ENCODE measurements at regions of chr19 and their contacts with region 1.

Region 1: DNA sequence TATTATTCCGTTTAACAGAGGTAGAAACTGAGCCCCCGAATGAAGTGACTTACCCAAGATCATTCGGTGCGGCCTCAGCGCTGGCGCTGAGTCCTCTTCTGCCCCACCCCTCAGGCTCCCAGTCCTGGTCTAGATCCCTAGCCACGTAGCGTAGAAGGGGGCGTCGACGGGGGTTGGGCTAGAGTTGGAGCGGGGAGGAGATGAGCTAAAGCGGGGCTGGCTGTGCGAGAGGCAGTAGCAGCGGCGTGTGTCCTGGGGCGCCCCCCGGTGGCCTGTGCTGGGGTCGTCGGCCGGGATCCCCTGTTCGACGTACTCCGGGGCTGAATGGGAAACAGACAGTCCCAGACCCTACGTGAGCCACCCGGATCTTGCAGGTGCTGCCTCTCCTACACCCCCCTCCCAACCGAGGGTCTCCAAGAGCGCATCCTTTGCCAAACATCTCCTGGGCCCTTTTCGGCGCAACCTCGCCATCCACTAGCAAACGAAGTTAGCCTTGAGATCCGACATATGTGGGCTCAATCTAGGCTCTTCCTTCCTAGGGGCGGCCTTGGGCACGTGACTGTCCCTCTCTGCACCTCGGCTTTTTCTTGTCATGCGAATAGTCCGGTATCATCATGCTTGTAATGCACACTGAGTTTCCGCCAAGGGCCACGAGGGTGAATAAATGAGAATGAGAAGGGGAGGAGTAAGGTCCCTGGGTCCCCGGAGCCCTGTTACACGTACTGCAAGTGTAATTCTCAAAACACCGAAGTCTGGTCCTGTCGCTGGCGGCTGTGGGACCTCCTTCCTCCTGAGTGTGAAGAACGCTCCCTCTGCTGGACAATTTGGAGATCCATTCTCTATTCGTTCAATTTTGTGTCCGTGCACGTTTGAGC is 47.7 kb downstream of the CYP4F22 start:
- DNase-seq: peak; percentile 95 to 97
- ATAC-seq: peak; percentile 84 to 94 (median 86)
- H3K4me3 ChIP-seq: peak overlapping the region; percentile 37
- H3K4me3 Mint-ChIP-seq: peak overlapping the region; percentile 86
- H3K27ac ChIP-seq: peak overlapping the region; percentile 57
- H3K27ac Mint-ChIP-seq: peak overlapping the region; percentile 81 to 84
- H3K4me1 ChIP-seq: peaks cover 23% of the 10 kb centered on the region
- H3K4me1 Mint-ChIP-seq: peaks cover 21 to 31% of the 10 kb centered on the region in 2 donors
- H3K27me3 ChIP-seq: no peaks in the 10 kb centered on the region
- H3K27me3 Mint-ChIP-seq: no peaks in the 10 kb centered on the region
- CTCF ChIP-seq: peak; percentile 73

Region 2: GRCh38 chr19:15091901-15092753 is 463.9 kb before region 1 on chr19:
- intact Hi-C with region 1: loop called (anchors 2 kb)
- DNase-seq: peak; percentile 20 to 88
- ATAC-seq: peak; percentile 77 to 78 (median 78)
- H3K4me3 ChIP-seq: no peak overlapping the region
- H3K4me3 Mint-ChIP-seq: no peak overlapping the region
- H3K27ac ChIP-seq: no peak overlapping the region
- H3K27ac Mint-ChIP-seq: no peak overlapping the region
- H3K4me1 ChIP-seq: peaks cover 7% of the 10 kb centered on the region
- H3K4me1 Mint-ChIP-seq: no peaks in the 10 kb centered on the region
- H3K27me3 ChIP-seq: no peaks in the 10 kb centered on the region
- H3K27me3 Mint-ChIP-seq: peaks cover 9 to 12% of the 10 kb centered on the region in 2 donors
- CTCF ChIP-seq: peak; percentile 76

Region 3: GRCh38 chr19:15177269-15178116 is 378.5 kb before region 1 on chr19:
- intact Hi-C with region 1: loop called (anchors 1 kb)
- DNase-seq: peak; percentile 85 to 92
- ATAC-seq: peak; percentile 93 to 99 (median 98)
- H3K4me3 ChIP-seq: no peak overlapping the region
- H3K4me3 Mint-ChIP-seq: peak overlapping the region; percentile 28
- H3K27ac ChIP-seq: no peak overlapping the region
- H3K27ac Mint-ChIP-seq: no peak overlapping the region
- H3K4me1 ChIP-seq: peaks cover 5% of the 10 kb centered on the region
- H3K4me1 Mint-ChIP-seq: peaks cover 6 to 11% of the 10 kb centered on the region in 2 donors
- H3K27me3 ChIP-seq: peaks cover 2% of the 10 kb centered on the region
- H3K27me3 Mint-ChIP-seq: peaks cover 0 to 14% of the 10 kb centered on the region in 2 donors
- CTCF ChIP-seq: peak; percentile 96

Region 4: DNA sequence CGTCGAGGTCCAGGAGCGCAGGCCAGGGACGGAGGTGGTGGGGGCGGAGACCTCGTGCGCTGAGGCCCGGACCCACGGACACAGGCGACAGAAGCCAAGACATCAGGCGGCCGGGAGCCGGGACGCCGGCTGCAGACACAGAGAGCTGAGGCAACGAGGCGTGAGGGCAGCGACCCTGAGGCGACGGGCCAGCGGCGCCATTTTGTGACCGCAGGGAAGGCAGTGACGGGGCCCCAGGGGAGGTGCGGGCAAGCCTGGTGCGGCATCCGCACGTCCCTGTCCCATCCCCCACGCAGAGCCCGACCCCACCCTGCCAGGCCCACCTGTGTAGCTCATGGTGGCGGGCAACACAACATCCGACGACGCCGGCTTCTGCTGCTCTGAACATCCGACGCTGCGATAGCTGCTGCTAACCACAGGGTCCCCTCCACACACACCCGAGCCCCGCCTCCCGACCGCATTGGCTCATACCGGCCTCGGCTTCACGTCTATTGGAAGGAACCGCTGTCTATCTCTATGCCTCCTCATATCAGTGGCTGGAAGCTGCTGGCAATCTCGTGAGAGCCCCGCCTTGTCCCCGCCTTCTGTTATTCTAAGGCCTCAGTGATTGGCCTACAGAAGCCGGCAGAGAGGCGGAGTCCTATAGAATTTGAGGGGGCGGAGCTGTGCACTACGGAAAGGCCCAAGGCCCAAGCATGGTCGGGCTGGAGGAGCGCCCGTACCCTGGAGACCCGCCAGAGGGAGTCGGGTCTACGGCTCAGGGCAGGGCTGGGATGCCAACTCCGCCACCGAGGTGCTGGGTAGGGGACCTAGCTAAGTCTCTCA is 137.2 kb before region 1 on chr19 and contains the start of gene AKAP8L:
- intact Hi-C with region 1: loop called (anchors 1 kb)
- DNase-seq: peak; percentile 99
- ATAC-seq: peak; percentile 91 to 98 (median 93)
- H3K4me3 ChIP-seq: peak within 1 kb of the TSS; percentile 86
- H3K4me3 Mint-ChIP-seq: peak within 1 kb of the TSS; percentile 95
- H3K27ac ChIP-seq: peak within 1 kb of the TSS; percentile 50
- H3K27ac Mint-ChIP-seq: peak within 1 kb of the TSS; percentile 91 to 98
- H3K4me1 ChIP-seq: peaks cover 25% of the 10 kb centered on the region
- H3K4me1 Mint-ChIP-seq: peaks cover 42 to 45% of the 10 kb centered on the region in 2 donors
- H3K27me3 ChIP-seq: no peaks in the 10 kb centered on the region
- H3K27me3 Mint-ChIP-seq: no peaks in the 10 kb centered on the region
- CTCF ChIP-seq: peak; percentile 81
- total RNA-seq, gene AKAP8L: 144 to 174 (median 173) TPM

Region 5: DNA sequence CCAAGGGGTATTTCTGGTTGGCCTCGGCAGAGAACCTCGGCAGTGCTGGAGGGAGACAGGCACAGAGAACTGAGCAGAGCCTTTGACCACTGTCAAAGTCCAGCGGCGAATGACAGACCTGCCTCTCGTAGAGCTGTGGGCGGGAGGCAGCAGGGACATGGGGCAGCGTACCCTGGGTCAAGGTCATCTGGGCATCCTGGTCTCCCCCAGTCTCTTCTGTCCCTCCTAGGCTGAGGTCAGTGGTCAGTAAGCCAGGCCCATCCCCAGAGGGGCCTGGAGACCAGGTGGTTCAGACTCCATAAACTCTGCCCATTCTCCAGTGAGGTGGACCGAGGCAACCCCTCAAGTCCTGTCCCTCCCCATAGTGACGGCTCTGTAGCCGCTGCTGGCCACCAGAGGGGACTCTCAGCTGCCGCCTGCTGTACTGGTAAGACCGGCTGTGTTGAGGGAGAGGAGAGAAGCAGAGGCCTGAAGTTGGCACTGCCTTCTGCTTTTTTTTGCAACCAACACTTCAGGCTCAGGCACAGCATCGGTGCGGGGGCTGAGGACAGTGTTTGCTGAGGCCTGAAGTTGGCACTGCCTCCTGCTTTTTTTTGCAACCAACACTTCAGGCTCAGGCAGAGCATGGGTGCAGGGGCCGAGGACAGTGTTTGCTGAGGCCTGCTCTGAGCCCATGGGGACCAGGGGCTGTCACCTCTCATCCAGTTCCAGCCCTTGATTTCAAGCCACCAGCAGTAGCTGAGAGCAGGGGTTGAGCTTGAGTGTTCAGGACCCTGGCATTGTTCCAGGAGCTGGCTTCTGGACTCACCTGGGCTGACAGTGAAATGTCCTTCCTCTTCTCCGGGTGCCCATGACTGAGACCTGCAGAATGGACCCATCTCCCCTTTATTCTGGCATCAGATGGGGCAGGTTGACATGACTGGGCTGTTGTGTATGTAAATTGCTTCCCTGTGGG is 76.3 kb before region 1 on chr19 and contains the start of gene PGLYRP2:
- intact Hi-C with region 1: loop called (anchors 1 kb)
- DNase-seq: peak in 1 of 2 donors; percentile 30
- ATAC-seq: peak in 2 of 3 donors; percentile 49 to 54
- H3K4me3 ChIP-seq: no peak within 1 kb of the TSS
- H3K4me3 Mint-ChIP-seq: no peak within 1 kb of the TSS
- H3K27ac ChIP-seq: no peak within 1 kb of the TSS
- H3K27ac Mint-ChIP-seq: no peak within 1 kb of the TSS
- H3K4me1 ChIP-seq: peaks cover 19% of the 10 kb centered on the region
- H3K4me1 Mint-ChIP-seq: peaks cover 11 to 22% of the 10 kb centered on the region in 2 donors
- H3K27me3 ChIP-seq: no peaks in the 10 kb centered on the region
- H3K27me3 Mint-ChIP-seq: no peaks in the 10 kb centered on the region
- CTCF ChIP-seq: no peak
- total RNA-seq, gene PGLYRP2: 0.21 to 0.28 TPM in 2 of 3 donors, not detected in the other

Region 6: DNA sequence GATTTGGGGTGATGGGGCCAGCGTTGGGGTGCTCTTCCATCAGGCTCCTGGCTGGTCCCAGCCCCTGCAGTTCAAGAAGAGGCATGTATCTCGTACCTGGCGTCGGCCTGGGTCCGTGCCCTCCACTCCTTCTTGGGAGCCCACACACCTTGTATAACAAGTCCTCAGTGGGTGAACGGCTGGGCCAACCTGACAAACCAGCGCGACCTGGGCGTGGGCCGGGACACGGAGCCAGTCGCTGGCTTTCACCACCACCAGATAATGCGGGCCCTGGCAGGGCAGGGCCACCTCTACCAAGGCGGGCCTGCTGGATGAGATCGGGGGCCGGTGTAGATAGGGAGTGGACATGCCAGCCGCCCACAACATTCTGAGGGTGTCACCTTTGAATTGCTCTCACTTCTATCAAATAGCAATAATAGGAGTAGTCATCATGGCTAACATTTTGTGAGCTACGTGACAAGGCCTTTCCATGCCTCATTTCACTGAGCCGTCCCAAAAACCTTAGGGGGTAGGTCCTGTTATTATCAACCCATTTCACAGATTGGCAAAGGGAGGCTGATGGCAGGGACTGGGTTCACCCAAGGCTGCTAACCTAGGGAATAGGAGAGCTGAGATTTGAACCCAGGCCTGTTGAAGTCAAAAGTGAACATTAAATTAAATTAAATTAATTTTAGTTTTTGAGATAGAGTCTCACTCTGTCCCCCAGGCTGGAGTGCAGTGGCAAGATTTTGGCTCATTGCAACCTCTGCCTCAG is 44.1 kb before region 1 on chr19:
- intact Hi-C with region 1: loop called (anchors 5 kb)
- DNase-seq: no peak
- ATAC-seq: no peak
- H3K4me3 ChIP-seq: no peak overlapping the region
- H3K4me3 Mint-ChIP-seq: no peak overlapping the region
- H3K27ac ChIP-seq: no peak overlapping the region
- H3K27ac Mint-ChIP-seq: no peak overlapping the region
- H3K4me1 ChIP-seq: peaks cover 35% of the 10 kb centered on the region
- H3K4me1 Mint-ChIP-seq: peaks cover 31 to 36% of the 10 kb centered on the region in 2 donors
- H3K27me3 ChIP-seq: peaks cover 8% of the 10 kb centered on the region
- H3K27me3 Mint-ChIP-seq: peaks cover 8 to 17% of the 10 kb centered on the region in 2 donors
- CTCF ChIP-seq: no peak

Region 7: GRCh38 chr19:15532779-15533521 is 23.0 kb before region 1 on chr19:
- intact Hi-C with region 1: no loop called
- DNase-seq: peak in 1 of 2 donors; percentile 22
- ATAC-seq: no peak
- H3K4me3 ChIP-seq: no peak overlapping the region
- H3K4me3 Mint-ChIP-seq: no peak overlapping the region
- H3K27ac ChIP-seq: no peak overlapping the region
- H3K27ac Mint-ChIP-seq: peak overlapping the region; percentile 11 to 34
- H3K4me1 ChIP-seq: peaks cover 3% of the 10 kb centered on the region
- H3K4me1 Mint-ChIP-seq: peaks cover 10 to 25% of the 10 kb centered on the region in 2 donors
- H3K27me3 ChIP-seq: no peaks in the 10 kb centered on the region
- H3K27me3 Mint-ChIP-seq: peaks cover 0 to 7% of the 10 kb centered on the region in 2 donors
- CTCF ChIP-seq: no peak

Measured in natural killer cell (primary cell).